ENCODE measurements at regions of chr16 and their contacts with region 1.

Region 1: GRCh38 chr16:57535680-57536305 is 578 bp downstream of the CCDC102A start:
- DNase-seq: peak; percentile 97
- ATAC-seq: peak; percentile 80
- H3K4me3 Mint-ChIP-seq: peak overlapping the region; percentile 78
- H3K27ac Mint-ChIP-seq: peak overlapping the region; percentile 94
- H3K4me1 Mint-ChIP-seq: peaks cover 70% of the 10 kb centered on the region
- H3K27me3 Mint-ChIP-seq: no peaks in the 10 kb centered on the region

Region 2: DNA sequence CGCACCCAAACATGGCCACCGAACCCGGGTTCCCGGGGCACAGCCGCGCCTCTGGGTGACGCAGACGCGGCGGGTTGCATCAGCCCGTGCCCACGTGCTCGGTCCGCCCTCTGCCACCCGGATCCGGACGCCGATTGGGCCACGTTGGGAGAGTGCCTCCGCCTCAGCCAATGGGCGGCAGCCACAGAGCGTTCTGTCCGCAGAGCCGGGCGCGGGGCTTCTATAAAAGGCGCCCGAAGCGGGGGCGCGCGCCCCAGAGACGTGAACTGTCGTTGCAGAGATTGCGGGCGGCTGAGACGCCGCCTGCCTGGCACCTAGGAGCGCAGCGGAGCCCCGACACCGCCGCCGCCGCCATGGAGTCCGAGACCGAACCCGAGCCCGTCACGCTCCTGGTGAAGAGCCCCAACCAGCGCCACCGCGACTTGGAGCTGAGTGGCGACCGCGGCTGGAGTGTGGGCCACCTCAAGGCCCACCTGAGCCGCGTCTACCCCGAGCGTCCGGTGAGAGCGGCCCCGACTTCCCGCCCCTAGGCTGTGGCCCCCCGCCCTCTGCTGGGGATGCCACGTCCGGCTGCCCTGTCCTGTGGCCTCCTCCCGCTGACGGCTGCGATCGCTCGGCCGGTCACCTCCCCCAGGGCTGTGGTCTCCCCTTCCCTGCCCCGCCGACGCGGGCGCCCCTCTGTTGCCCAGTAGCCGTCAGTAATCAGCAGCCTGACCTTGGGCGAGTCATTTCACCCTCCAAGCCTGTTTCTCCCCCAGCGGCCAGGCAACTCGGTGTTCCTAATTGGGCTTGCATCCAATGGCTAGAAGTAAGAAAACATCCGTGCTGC is 603.7 kb before region 1 on chr16 and contains the start of gene HERPUD1:
- CTCF ChIA-PET with region 1: no interaction called
- POLR2A ChIA-PET with region 1: no interaction called
- intact Hi-C with region 1: loop called in 1 of 2 experiments (anchors 10 kb)
- DNase-seq: peak; percentile 100
- ATAC-seq: peak; percentile 94
- H3K4me3 Mint-ChIP-seq: peak within 1 kb of the TSS; percentile 98
- H3K27ac Mint-ChIP-seq: peak within 1 kb of the TSS; percentile 95
- H3K4me1 Mint-ChIP-seq: peaks cover 40% of the 10 kb centered on the region
- H3K27me3 Mint-ChIP-seq: no peaks in the 10 kb centered on the region
- total RNA-seq, gene HERPUD1: 136 to 195 TPM

Region 3: GRCh38 chr16:57447186-57447962 is 88.4 kb before region 1 on chr16 and contains the starts of genes CIAPIN1 and COQ9:
- CTCF ChIA-PET with region 1: interaction called, 3 read pairs
- POLR2A ChIA-PET with region 1: no interaction called
- intact Hi-C with region 1: loop called in 1 of 2 experiments (anchors 1 kb)
- DNase-seq: peak; percentile 96
- ATAC-seq: peak; percentile 99
- H3K4me3 Mint-ChIP-seq: peak within 1 kb of the TSS; percentile 91
- H3K27ac Mint-ChIP-seq: peak within 1 kb of the TSS; percentile 85
- H3K4me1 Mint-ChIP-seq: peaks cover 32% of the 10 kb centered on the region
- H3K27me3 Mint-ChIP-seq: no peaks in the 10 kb centered on the region
- total RNA-seq, gene CIAPIN1: 41.7 to 42.6 TPM
- total RNA-seq, gene COQ9: 39.4 to 52.1 TPM

Region 4: DNA sequence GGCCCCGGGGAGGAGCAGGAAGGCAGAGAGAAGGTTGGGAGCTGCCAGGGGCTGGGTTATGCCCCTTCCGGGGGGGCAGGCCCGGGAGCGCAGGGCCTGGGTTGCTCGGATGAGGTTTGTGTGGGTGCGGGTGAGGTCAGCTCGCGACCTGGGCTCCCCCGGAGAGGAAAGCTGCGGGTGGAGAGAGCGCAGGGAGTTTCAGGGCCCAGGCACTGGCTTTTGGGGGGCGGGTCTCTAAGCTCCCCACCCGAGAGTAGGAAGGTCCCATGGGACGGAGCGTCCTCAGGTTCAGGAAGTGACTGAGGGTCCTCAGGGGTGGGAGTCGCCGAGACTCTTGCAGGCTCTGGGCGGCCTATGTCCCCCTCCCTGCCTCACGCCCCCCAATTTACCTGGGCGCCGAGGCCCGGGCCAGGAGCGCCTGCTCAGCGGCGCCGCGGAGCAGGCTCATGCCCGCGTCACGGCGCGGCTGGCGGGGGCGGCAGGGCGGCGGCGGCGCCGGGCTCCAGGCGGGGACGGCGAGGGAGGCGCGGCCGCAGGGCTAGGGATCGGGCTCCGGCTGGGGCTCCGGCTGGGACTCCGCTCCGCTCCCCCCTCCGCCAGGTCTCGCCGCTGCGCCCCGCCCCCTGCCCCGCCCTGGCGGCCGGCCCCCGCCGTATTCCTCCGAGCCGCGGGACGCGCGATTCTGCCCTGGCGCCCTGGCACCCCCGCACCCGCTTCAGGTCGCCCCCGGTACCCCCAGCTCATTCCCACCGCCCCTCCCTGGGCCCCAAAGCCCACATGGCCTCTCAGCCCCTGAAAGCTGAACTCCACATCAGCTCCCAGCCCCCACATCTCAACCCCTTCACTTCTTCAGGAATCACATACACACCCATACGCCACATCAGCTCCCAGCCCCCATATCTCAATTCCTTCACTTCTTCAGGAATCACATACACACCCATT is 49.6 kb before region 1 on chr16 and contains the start of gene DOK4:
- CTCF ChIA-PET with region 1: interaction called, 9 read pairs
- POLR2A ChIA-PET with region 1: no interaction called
- intact Hi-C with region 1: loop called (anchors 1 to 2 kb)
- DNase-seq: peak; percentile 89
- ATAC-seq: peak; percentile 93
- H3K4me3 Mint-ChIP-seq: peak within 1 kb of the TSS; percentile 75
- H3K27ac Mint-ChIP-seq: peak within 1 kb of the TSS; percentile 71
- H3K4me1 Mint-ChIP-seq: peaks cover 22% of the 10 kb centered on the region
- H3K27me3 Mint-ChIP-seq: no peaks in the 10 kb centered on the region
- total RNA-seq, gene DOK4: 5.7 to 6.7 TPM

Region 5: GRCh38 chr16:57564571-57565270 is 28.9 kb after region 1 on chr16:
- CTCF ChIA-PET with region 1: no interaction called
- POLR2A ChIA-PET with region 1: no interaction called
- intact Hi-C with region 1: no loop called
- DNase-seq: no peak
- ATAC-seq: no peak
- H3K4me3 Mint-ChIP-seq: no peak overlapping the region
- H3K27ac Mint-ChIP-seq: no peak overlapping the region
- H3K4me1 Mint-ChIP-seq: peaks cover 6% of the 10 kb centered on the region
- H3K27me3 Mint-ChIP-seq: peaks cover 2% of the 10 kb centered on the region

Region 6: DNA sequence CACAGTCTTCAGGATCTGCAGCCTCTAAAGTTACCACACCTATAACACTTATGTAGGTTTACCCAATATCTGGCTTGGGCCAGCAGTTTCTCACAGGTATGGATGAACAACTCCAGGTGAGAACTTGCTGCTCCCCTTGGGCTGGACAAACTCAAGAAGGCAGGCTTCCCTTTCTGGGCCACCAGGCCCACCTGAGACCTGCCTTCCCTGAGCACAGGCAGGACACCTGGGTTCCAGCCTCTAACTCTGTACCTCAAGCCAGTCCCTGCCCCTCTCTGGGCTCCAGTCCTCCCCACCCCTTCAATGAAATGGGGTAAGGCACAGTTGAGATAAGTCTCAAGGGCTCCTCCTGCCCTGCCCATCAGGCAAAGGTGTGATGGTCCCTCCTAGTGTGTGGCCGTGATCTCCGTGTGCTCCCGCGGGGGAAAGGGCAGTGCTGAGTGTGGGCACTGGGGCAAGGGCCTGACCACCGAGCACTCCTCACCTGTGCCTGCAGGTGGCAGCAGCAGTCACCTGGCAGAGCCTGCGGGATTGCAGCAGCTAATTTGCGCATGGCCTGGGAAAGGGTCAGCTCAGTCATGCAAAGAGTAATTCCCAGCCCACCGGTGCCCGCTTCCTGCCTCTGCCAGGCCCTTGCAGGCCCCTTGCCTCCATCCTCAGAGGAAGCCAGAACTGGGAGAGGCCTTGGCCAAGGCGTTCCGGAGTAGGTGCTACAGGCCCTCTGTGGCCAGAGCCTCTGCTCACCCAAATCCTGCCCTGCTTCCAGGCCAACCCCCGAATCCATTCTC is 64.4 kb after region 1 on chr16:
- CTCF ChIA-PET with region 1: no interaction called
- POLR2A ChIA-PET with region 1: interaction called, 5 read pairs
- intact Hi-C with region 1: loop called (anchors 1 to 2 kb)
- DNase-seq: peak; percentile 73
- ATAC-seq: peak; percentile 18
- H3K4me3 Mint-ChIP-seq: no peak overlapping the region
- H3K27ac Mint-ChIP-seq: no peak overlapping the region
- H3K4me1 Mint-ChIP-seq: peaks cover 35% of the 10 kb centered on the region
- H3K27me3 Mint-ChIP-seq: no peaks in the 10 kb centered on the region

Region 7: DNA sequence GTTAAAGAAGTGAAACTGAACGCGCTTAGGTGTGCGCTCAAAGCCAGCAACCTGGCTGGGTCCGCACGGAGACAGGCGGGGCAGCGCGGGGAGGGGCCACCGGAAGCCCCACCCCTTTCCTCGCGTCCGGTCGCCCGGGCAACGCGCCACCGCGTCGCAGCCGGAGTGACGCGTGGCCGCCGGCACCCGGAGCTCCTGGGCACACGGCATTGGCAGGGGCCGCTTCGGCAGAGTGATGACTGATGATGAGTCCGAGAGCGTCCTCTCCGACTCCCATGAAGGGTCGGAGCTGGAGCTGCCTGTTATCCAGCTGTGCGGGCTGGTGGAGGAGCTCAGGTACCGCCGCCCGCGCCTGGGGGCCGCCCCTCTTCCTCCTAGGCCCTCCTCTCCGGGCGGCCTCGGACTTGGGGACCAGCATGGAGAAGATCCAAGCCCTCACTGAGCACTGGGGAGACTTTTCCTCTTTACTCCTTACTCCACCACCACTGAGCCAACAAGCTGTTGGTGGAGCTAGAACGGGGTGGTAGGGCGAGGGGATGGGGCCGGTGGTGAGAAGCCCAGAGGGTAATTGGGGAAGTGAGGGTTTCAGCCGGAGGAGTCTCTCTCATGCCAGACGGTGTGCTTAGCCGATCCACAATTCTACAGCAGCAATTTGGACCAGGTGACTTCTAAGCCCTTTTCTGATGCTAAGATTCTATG is 714.1 kb after region 1 on chr16:
- CTCF ChIA-PET with region 1: no interaction called
- POLR2A ChIA-PET with region 1: no interaction called
- intact Hi-C with region 1: loop called in 1 of 2 experiments (anchors 1 kb)
- DNase-seq: peak; percentile 92
- ATAC-seq: peak; percentile 98
- H3K4me3 Mint-ChIP-seq: peak overlapping the region; percentile 81
- H3K27ac Mint-ChIP-seq: peak overlapping the region; percentile 85
- H3K4me1 Mint-ChIP-seq: peaks cover 8% of the 10 kb centered on the region
- H3K27me3 Mint-ChIP-seq: no peaks in the 10 kb centered on the region

Measured in activated CD4-positive, alpha-beta T cell treated with anti-CD3 and anti-CD28 coated beads for 36 hours (primary cell).